AG04449 (cell line): ENCODE measurements at regions of chr12 and their contacts with region 1.

Region 1: GRCh38 chr12:6312529-6313325 is 2.2 kb downstream of the PLEKHG6 start:
- DNase-seq: no peak
- H3K4me3 ChIP-seq: no peak overlapping the region
- CTCF ChIP-seq: no peak

Region 2: GRCh38 chr12:6215932-6216494 is 96.7 kb before region 1 on chr12:
- CTCF ChIA-PET with region 1: no interaction called
- POLR2A ChIA-PET with region 1: no interaction called
- DNase-seq: peak; percentile 75
- H3K4me3 ChIP-seq: no peak overlapping the region
- CTCF ChIP-seq: no peak

Region 3: DNA sequence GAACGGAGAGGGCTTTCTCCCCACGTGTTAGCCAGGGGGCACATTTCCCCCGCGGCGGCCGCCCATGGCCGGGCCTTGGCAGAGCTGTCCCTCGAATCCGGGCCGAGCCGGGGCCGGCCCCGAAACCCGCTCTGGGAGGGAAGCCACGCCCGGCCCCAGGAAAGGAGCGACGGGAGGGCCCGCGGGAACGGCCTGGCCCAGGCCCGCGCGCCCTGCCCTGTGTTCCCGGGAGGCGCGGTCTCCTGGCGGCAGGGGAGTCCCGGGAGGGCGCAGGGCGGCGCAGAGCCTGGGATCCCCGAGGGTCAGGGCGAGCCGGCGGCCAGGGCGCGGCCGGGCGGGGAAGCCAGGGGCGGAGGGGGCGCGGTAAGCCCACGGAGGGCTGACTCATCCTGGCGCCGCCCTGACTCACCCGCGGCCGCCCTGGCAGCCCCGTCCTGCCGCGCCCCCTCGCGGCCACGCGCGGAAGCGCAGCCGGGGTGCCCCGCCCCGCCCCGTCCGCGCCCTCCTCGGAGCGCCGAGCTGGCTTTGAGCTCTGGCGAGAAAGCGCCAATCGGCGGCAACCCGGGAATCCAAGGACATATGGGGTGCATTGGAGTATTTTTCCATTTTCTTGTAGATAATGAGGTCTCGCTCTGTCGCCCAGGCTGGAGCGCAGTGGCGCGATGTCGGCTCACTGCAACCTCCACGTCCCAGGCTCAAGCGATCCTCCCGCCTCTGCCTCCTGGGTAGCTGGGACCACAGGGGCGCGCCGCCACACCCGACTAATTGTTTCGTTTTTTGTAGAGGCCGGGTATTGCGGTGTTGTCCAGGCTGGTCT is 34.1 kb before region 1 on chr12:
- CTCF ChIA-PET with region 1: no interaction called
- POLR2A ChIA-PET with region 1: no interaction called
- DNase-seq: no peak
- H3K4me3 ChIP-seq: peak overlapping the region; percentile 60
- CTCF ChIP-seq: peak; percentile 64

Region 4: DNA sequence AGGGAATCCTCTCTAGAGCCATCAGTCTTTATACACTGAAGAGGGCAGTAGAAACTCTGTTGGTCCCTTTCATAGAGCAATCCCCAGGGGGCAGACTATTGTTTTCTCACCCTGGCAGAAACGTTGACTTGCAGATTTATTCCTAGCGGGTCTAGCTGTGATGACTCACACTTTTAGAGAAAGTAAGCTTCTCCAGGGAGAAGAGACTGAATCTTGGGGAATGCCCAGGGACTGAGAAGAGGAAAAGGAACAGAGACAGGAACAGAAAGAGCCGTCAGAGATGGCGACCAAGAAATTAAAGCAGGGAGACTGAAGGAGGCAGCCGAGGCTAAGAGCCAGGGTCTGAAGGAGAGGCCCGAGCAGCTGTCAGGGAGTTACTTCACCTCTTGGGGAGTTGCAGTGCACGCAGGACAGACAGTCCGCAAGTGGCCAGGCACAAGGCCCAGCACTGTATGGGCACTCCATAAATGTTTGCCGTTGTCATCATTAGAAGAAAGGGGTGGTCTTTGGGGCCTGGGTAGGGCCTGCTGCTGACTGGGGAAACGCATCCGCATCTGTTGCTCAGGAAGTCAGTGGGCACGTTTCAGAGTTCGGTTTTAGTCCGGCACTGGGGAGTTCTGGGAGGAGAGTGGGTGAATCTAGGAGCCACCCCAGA is 10.7 kb after region 1 on chr12:
- CTCF ChIA-PET with region 1: interaction called, 12 read pairs
- POLR2A ChIA-PET with region 1: no interaction called
- DNase-seq: peak; percentile 76
- H3K4me3 ChIP-seq: 0 out of 2 replicates have a peak overlapping the region, but pooled peaks have one; percentile 8
- CTCF ChIP-seq: peak; percentile 46